ENCODE measurements at regions of chr9 and their contacts with region 1.

Region 1: GRCh38 chr9:6681147-6681956 is 35.8 kb upstream of the GLDC start:
- DNase-seq: peak; percentile 95
- H3K4me3 ChIP-seq: peak overlapping the region; percentile 85
- H3K27ac ChIP-seq: peak overlapping the region; percentile 89
- H3K4me1 ChIP-seq: peaks cover 32% of the 10 kb centered on the region
- CTCF ChIP-seq: no peak

Region 2: GRCh38 chr9:6055213-6055612 is 626.1 kb before region 1 on chr9:
- CTCF ChIA-PET with region 1: no interaction called
- POLR2A ChIA-PET with region 1: no interaction called
- intact Hi-C with region 1: loop called (anchors 10 kb)
- DNase-seq: peak; percentile 77
- H3K4me3 ChIP-seq: no peak overlapping the region
- H3K27ac ChIP-seq: no peak overlapping the region
- H3K4me1 ChIP-seq: peaks cover 17% of the 10 kb centered on the region
- CTCF ChIP-seq: peak; percentile 81

Region 3: GRCh38 chr9:6584881-6585597 is 96.3 kb before region 1 on chr9:
- CTCF ChIA-PET with region 1: no interaction called
- POLR2A ChIA-PET with region 1: interaction called, 5 read pairs
- intact Hi-C with region 1: loop called (anchors 5 kb)
- DNase-seq: peak; percentile 65
- H3K4me3 ChIP-seq: no peak overlapping the region
- H3K27ac ChIP-seq: no peak overlapping the region
- H3K4me1 ChIP-seq: peaks cover 18% of the 10 kb centered on the region
- CTCF ChIP-seq: peak; percentile 85

Region 4: GRCh38 chr9:6703898-6704639 is 22.7 kb after region 1 on chr9:
- CTCF ChIA-PET with region 1: interaction called, 5 read pairs
- POLR2A ChIA-PET with region 1: interaction called, 21 read pairs
- intact Hi-C with region 1: loop called (anchors 1 kb)
- DNase-seq: peak; percentile 91
- H3K4me3 ChIP-seq: peak overlapping the region; percentile 83
- H3K27ac ChIP-seq: peak overlapping the region; percentile 51
- H3K4me1 ChIP-seq: peaks cover 14% of the 10 kb centered on the region
- CTCF ChIP-seq: no peak

Measured in OCI-LY7 (cell line).